ENCODE measurements at regions of chr14 and their contacts with region 1.

Region 1: GRCh38 chr14:68816262-68816942 is 23.5 kb upstream of the ZFP36L1 start:
- DNase-seq: peak; percentile 90
- H3K4me3 Mint-ChIP-seq: peak overlapping the region; percentile 72
- H3K27ac Mint-ChIP-seq: peak overlapping the region; percentile 84
- H3K4me1 Mint-ChIP-seq: peaks cover 53% of the 10 kb centered on the region
- H3K27me3 Mint-ChIP-seq: no peaks in the 10 kb centered on the region

Region 2: GRCh38 chr14:67943947-67944346 is 872.5 kb before region 1 on chr14:
- CTCF ChIA-PET with region 1: interaction called, 20 read pairs
- POLR2A ChIA-PET with region 1: interaction called, 4 read pairs
- DNase-seq: peak; percentile 30
- H3K4me3 Mint-ChIP-seq: no peak overlapping the region
- H3K27ac Mint-ChIP-seq: no peak overlapping the region
- H3K4me1 Mint-ChIP-seq: no peaks in the 10 kb centered on the region
- H3K27me3 Mint-ChIP-seq: peaks cover 2% of the 10 kb centered on the region

Region 3: GRCh38 chr14:68248481-68249255 is 567.7 kb before region 1 on chr14:
- CTCF ChIA-PET with region 1: interaction called, 112 read pairs
- POLR2A ChIA-PET with region 1: interaction called, 40 read pairs
- DNase-seq: no peak
- H3K4me3 Mint-ChIP-seq: no peak overlapping the region
- H3K27ac Mint-ChIP-seq: no peak overlapping the region
- H3K4me1 Mint-ChIP-seq: peaks cover 15% of the 10 kb centered on the region
- H3K27me3 Mint-ChIP-seq: no peaks in the 10 kb centered on the region

Region 4: GRCh38 chr14:68283378-68284123 is 532.9 kb before region 1 on chr14:
- CTCF ChIA-PET with region 1: interaction called, 13 read pairs
- POLR2A ChIA-PET with region 1: interaction called, 25 read pairs
- DNase-seq: peak; percentile 79
- H3K4me3 Mint-ChIP-seq: peak overlapping the region; percentile 47
- H3K27ac Mint-ChIP-seq: peak overlapping the region; percentile 96
- H3K4me1 Mint-ChIP-seq: peaks cover 48% of the 10 kb centered on the region
- H3K27me3 Mint-ChIP-seq: no peaks in the 10 kb centered on the region

Region 5: DNA sequence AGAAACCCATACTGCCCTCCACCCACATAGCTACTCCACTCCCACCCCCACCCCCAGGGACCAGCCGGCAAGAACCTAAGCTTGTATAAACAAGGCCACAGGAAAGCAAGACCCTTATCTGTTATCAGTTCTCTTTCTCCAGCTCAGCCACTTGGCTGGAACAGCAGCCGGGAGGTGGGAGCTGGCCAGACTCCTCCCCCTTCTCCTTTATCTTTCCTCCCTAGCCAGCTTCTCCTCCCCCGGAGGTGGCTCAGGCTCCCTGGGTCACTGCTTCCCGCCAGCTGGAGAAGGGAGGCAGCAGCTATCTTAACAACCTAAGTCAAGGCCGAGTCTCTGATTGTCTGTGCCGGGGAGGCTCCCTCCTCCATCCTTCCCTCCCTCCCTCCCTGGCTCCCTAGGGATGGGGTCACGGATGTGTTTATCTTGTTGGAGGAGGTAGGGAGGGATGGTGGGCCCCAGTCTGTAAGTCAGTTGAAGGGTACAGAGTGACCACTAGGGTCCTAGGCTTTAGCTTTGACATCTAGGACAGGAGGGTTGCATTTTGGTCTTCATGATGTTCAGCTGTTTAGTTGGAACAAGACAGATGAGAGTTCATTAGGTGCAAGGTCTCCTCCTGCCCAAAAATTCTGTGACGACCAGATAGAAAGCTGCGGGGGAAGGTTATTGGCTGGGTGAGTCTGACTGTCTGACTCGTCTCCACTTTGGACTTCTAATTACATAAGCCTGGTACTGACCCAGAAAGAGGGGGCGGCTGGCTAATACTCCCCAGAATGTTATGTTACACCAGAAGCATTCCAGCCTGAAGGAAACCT is 53.2 kb before region 1 on chr14:
- CTCF ChIA-PET with region 1: no interaction called
- POLR2A ChIA-PET with region 1: no interaction called
- DNase-seq: no peak
- H3K4me3 Mint-ChIP-seq: no peak overlapping the region
- H3K27ac Mint-ChIP-seq: no peak overlapping the region
- H3K4me1 Mint-ChIP-seq: peaks cover 17% of the 10 kb centered on the region
- H3K27me3 Mint-ChIP-seq: peaks cover 2% of the 10 kb centered on the region

Region 6: GRCh38 chr14:69153131-69153872 is 336.9 kb after region 1 on chr14:
- CTCF ChIA-PET with region 1: no interaction called
- POLR2A ChIA-PET with region 1: no interaction called
- DNase-seq: peak; percentile 95
- H3K4me3 Mint-ChIP-seq: peak overlapping the region; percentile 92
- H3K27ac Mint-ChIP-seq: peak overlapping the region; percentile 69
- H3K4me1 Mint-ChIP-seq: peaks cover 32% of the 10 kb centered on the region
- H3K27me3 Mint-ChIP-seq: peaks cover 20% of the 10 kb centered on the region